ENCODE measurements at regions of chr7 and their contacts with region 1.

Region 1: GRCh38 chr7:36366718-36367560 is 22.7 kb upstream of the ANLN start:
- DNase-seq: peak; percentile 92
- H3K4me3 ChIP-seq: peak overlapping the region; percentile 58 to 89 (median 79)
- H3K27ac ChIP-seq: peak overlapping the region; percentile 70 to 80 (median 76)
- H3K4me1 ChIP-seq: peaks cover 0 to 15% (median 4%) of the 10 kb centered on the region in 4 donors
- H3K27me3 ChIP-seq: no peaks in the 10 kb centered on the region
- CTCF ChIP-seq: peak; percentile 78 to 90 (median 88)
- EP300 ChIP-seq: no peak
- POLR2A ChIP-seq: no peak

Region 2: DNA sequence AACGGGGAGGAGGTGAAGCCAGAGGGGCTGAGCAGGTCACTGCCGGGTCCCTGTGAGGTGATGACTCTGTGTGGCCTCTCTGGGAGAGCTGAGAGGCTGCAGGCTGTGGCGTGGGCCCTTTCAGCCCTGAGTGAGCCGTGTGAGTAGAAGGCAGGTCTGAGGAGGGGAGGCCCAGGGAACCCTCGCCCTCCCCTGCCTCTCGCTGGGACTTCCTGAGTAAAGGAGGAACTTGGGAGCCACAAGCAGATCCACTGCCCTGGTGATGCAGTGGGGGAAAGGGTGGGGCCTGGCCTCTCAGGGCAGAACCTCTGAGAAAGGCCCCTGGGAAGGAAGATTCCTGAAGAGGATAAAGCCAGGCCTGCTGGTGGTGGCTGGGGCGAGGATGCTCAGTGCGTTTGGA is 191.1 kb before region 1 on chr7:
- intact Hi-C with region 1: no loop called
- DNase-seq: peak; percentile 81
- H3K4me3 ChIP-seq: peak overlapping the region in 2 of 4 donors; percentile 9 to 18
- H3K27ac ChIP-seq: peak overlapping the region; percentile 45 to 82 (median 72)
- H3K4me1 ChIP-seq: peaks cover 0 to 45% (median 42%) of the 10 kb centered on the region in 4 donors
- H3K27me3 ChIP-seq: no peaks in the 10 kb centered on the region
- CTCF ChIP-seq: no peak
- EP300 ChIP-seq: no peak
- POLR2A ChIP-seq: no peak

Region 3: GRCh38 chr7:36389371-36390198 is 22.6 kb after region 1 on chr7 and contains the start of gene ANLN:
- intact Hi-C with region 1: loop called (anchors 1 kb)
- DNase-seq: peak; percentile 97
- H3K4me3 ChIP-seq: peak within 1 kb of the TSS; percentile 30 to 66 (median 56)
- H3K27ac ChIP-seq: peak within 1 kb of the TSS; percentile 69 to 88 (median 81)
- H3K4me1 ChIP-seq: peaks cover 0 to 31% (median 16%) of the 10 kb centered on the region in 4 donors
- H3K27me3 ChIP-seq: no peaks in the 10 kb centered on the region
- CTCF ChIP-seq: no peak
- EP300 ChIP-seq: no peak
- POLR2A ChIP-seq: no peak
- total RNA-seq, gene ANLN: 3.6 to 16.9 (median 4.1) TPM